PC-3 (cell line): ENCODE measurements at regions of chr1 and their contacts with region 1.

Region 1: GRCh38 chr1:246420300-246420699 is 86.8 kb downstream of the SMYD3 start:
- DNase-seq: no peak
- ATAC-seq: no peak
- H3K4me3 ChIP-seq: no peak overlapping the region
- H3K27ac ChIP-seq: no peak overlapping the region
- H3K4me1 ChIP-seq: peaks cover 6% of the 10 kb centered on the region; the same call in 1 of the 2 replicates
- H3K27me3 ChIP-seq: no peaks in the 10 kb centered on the region
- CTCF ChIP-seq: no peak

Region 2: GRCh38 chr1:246043367-246043955 is 376.8 kb before region 1 on chr1:
- CTCF ChIA-PET with region 1: no interaction called
- POLR2A ChIA-PET with region 1: no interaction called
- intact Hi-C with region 1: no loop called
- DNase-seq: peak; percentile 48
- ATAC-seq: peak; percentile 20; the same call in 1 of the 2 replicates
- H3K4me3 ChIP-seq: no peak overlapping the region
- H3K27ac ChIP-seq: no peak overlapping the region
- H3K4me1 ChIP-seq: peaks cover 7% of the 10 kb centered on the region; the same call in 1 of the 2 replicates
- H3K27me3 ChIP-seq: no peaks in the 10 kb centered on the region
- CTCF ChIP-seq: no peak

Region 3: DNA sequence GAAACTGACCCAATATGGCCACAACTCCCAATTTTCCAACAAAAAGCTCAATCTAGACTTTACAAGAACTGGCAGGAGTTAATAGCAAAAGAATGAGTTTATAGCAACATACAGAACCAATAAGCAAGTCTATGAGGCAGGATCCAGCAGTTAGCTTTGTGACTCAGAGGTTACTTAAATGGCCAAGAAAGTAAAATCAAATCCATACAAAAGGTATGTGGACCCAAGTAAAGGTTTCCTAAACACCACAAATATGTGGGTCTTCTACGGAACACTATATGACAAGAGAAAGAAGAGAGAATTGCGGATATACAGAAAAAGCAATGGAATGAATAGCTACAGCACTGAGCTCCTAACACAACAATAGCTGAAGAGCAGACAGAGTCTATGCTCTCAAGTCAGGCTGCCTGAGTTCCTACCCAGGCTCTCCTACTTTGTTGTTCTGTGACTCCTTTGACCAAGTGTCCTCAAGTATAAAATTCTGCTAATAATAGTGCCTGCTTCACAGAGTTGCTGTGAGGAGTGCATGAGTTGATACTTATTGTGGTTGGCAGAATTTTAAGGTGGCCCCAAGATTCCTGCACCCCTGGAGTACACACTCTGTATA is 117.5 kb before region 1 on chr1:
- CTCF ChIA-PET with region 1: no interaction called
- POLR2A ChIA-PET with region 1: no interaction called
- intact Hi-C with region 1: loop called (anchors 5 kb)
- DNase-seq: peak; percentile 32
- ATAC-seq: peak; percentile 79
- H3K4me3 ChIP-seq: no peak overlapping the region
- H3K27ac ChIP-seq: no peak overlapping the region
- H3K4me1 ChIP-seq: peaks cover 12% of the 10 kb centered on the region
- H3K27me3 ChIP-seq: no peaks in the 10 kb centered on the region
- CTCF ChIP-seq: no peak

Region 4: DNA sequence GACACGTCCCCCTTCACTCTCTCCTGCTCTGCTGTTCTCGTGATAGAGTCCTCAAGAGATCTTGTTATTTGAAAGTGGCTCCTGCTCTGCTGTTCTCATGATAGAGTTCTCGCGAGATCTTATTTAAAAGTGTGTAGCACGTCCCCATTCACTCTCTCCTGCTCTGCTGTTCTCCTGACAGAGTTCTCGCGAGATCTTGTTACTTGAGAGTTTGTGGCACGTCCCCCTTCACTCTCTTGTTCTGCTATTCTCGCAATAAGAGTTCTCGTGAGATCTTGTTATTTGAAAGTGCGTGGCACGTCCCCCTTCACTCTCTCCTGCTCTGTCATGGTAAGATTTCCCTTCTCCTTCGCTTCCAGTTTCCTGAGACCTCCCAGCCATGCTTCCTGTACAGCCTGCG is 38.9 kb after region 1 on chr1:
- CTCF ChIA-PET with region 1: no interaction called
- POLR2A ChIA-PET with region 1: no interaction called
- intact Hi-C with region 1: no loop called
- DNase-seq: no peak
- ATAC-seq: no peak
- H3K4me3 ChIP-seq: no peak overlapping the region
- H3K27ac ChIP-seq: no peak overlapping the region
- H3K4me1 ChIP-seq: no peaks in the 10 kb centered on the region
- H3K27me3 ChIP-seq: no peaks in the 10 kb centered on the region
- CTCF ChIP-seq: no peak

Region 5: GRCh38 chr1:247335882-247336281 is 915.6 kb after region 1 on chr1:
- CTCF ChIA-PET with region 1: no interaction called
- POLR2A ChIA-PET with region 1: no interaction called
- intact Hi-C with region 1: no loop called
- DNase-seq: no peak
- ATAC-seq: no peak
- H3K4me3 ChIP-seq: no peak overlapping the region
- H3K27ac ChIP-seq: no peak overlapping the region
- H3K4me1 ChIP-seq: peaks cover 65% of the 10 kb centered on the region
- H3K27me3 ChIP-seq: no peaks in the 10 kb centered on the region
- CTCF ChIP-seq: no peak